Panc1 (cell line): ENCODE measurements at regions of chr4 and their contacts with region 1.

Region 1: GRCh38 chr4:32117694-32118093 is 1397.5 kb downstream of the PCDH7 start:
- DNase-seq: no peak
- ATAC-seq: no peak
- H3K4me3 ChIP-seq: no peak overlapping the region
- H3K27ac ChIP-seq: no peak overlapping the region
- H3K4me1 ChIP-seq: no peaks in the 10 kb centered on the region
- H3K27me3 ChIP-seq: no peaks in the 10 kb centered on the region
- CTCF ChIP-seq: peak; percentile 20; the same call in 1 of the 2 replicates

Region 2: GRCh38 chr4:30714408-30715027 is 1403.2 kb before region 1 on chr4:
- CTCF ChIA-PET with region 1: no interaction called
- POLR2A ChIA-PET with region 1: no interaction called
- in situ Hi-C with region 1: no loop called
- intact Hi-C with region 1: loop called (anchors 10 kb)
- DNase-seq: no peak
- ATAC-seq: 0 out of 2 replicates have a peak, but pooled peaks have one; percentile 50
- H3K4me3 ChIP-seq: no peak overlapping the region
- H3K27ac ChIP-seq: no peak overlapping the region
- H3K4me1 ChIP-seq: peaks cover 6% of the 10 kb centered on the region
- H3K27me3 ChIP-seq: no peaks in the 10 kb centered on the region
- CTCF ChIP-seq: peak; percentile 76

Region 3: DNA sequence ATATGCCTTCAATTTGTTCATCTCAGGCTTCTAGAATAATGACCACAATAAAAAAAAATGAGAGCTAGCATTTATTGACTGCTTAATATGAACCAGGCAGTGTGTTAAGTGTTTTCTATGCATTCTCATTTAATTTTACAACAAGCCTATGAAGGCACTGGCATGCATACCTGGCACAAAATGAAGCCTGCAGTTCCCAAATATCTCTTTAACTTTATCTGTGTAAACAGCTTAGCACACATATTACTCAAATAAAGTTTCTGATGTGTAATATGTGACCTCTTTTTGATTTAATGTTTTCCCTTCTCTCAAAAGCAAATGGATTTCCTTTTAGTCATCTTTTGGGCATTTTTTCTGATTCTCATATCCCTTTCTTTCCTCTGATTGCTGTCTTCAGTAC is 725.7 kb before region 1 on chr4:
- CTCF ChIA-PET with region 1: no interaction called
- POLR2A ChIA-PET with region 1: interaction called, 26 read pairs
- in situ Hi-C with region 1: no loop called
- intact Hi-C with region 1: no loop called
- DNase-seq: no peak
- ATAC-seq: no peak
- H3K4me3 ChIP-seq: no peak overlapping the region
- H3K27ac ChIP-seq: no peak overlapping the region
- H3K4me1 ChIP-seq: no peaks in the 10 kb centered on the region
- H3K27me3 ChIP-seq: no peaks in the 10 kb centered on the region
- CTCF ChIP-seq: no peak

Region 4: DNA sequence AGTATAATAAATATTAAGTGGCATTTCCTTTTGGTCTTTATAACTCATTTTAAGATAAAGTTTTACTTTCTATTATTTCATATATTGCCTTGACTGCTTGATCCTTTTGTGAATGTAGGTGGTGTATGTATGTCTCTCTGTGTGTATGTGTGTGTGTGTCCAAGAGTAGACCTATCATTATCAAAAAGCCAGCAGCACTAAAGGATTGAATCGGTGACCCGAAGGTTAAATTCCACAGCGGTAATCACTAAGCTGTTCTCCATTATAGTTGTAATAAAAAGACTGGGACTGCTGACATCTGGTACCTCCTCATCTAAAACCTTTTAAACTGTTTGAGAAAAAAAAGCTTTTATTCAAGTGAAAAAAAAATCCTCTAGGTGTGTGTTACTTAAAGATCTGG is 382.7 kb before region 1 on chr4:
- CTCF ChIA-PET with region 1: no interaction called
- POLR2A ChIA-PET with region 1: no interaction called
- in situ Hi-C with region 1: no loop called
- intact Hi-C with region 1: no loop called
- DNase-seq: no peak
- ATAC-seq: no peak
- H3K4me3 ChIP-seq: no peak overlapping the region
- H3K27ac ChIP-seq: no peak overlapping the region
- H3K4me1 ChIP-seq: no peaks in the 10 kb centered on the region; the same call in 1 of the 2 replicates
- H3K27me3 ChIP-seq: no peaks in the 10 kb centered on the region
- CTCF ChIP-seq: no peak